Activated CD8-positive, alpha-beta memory T cell treated with anti-CD3 and anti-CD28 coated beads, Interleukin-2, amount 10 ng/mL, durations not matched to agents 7 days and 5 days (primary cell): ENCODE measurements at regions of chr1 and their contacts with region 1.

Region 1: GRCh38 chr1:154974063-154974807 is at the start of gene CKS1B:
- DNase-seq: peak; percentile 98
- ATAC-seq: peak; percentile 89
- H3K4me3 Mint-ChIP-seq: no peak within 1 kb of the TSS
- H3K27ac Mint-ChIP-seq: no peak within 1 kb of the TSS
- H3K4me1 Mint-ChIP-seq: peaks cover 38% of the 10 kb centered on the region
- H3K27me3 Mint-ChIP-seq: no peaks in the 10 kb centered on the region
- total RNA-seq, gene CKS1B: 149 to 155 TPM

Region 2: GRCh38 chr1:154747740-154748404 is 226.4 kb before region 1 on chr1:
- CTCF ChIA-PET with region 1: no interaction called
- DNase-seq: peak; percentile 82
- ATAC-seq: peak; percentile 81
- H3K4me3 Mint-ChIP-seq: peak overlapping the region; percentile 46
- H3K27ac Mint-ChIP-seq: peak overlapping the region; percentile 76
- H3K4me1 Mint-ChIP-seq: peaks cover 54% of the 10 kb centered on the region
- H3K27me3 Mint-ChIP-seq: peaks cover 81% of the 10 kb centered on the region

Region 3: DNA sequence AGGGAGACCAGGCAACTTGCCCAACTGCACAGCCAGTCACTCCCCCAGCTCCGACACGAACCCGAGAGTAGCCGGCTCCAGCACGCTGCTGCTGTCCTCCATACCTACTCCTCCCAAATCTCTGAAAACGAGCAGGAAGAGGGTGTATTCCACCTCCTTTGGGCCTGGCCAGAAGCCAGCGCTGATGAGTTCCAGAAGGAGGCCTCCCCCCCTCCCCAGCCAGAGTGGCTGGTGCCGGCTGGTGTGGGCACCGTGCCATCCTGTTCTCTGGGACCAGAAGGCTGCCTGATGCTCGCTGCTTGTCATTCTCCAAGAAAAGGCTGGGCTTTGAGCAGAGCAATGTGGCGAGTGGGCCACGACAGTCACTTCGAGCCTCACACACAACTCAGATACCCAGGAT is 126.3 kb before region 1 on chr1:
- CTCF ChIA-PET with region 1: no interaction called
- DNase-seq: no peak
- ATAC-seq: no peak
- H3K4me3 Mint-ChIP-seq: no peak overlapping the region
- H3K27ac Mint-ChIP-seq: no peak overlapping the region
- H3K4me1 Mint-ChIP-seq: peaks cover 10% of the 10 kb centered on the region
- H3K27me3 Mint-ChIP-seq: peaks cover 25% of the 10 kb centered on the region

Region 4: DNA sequence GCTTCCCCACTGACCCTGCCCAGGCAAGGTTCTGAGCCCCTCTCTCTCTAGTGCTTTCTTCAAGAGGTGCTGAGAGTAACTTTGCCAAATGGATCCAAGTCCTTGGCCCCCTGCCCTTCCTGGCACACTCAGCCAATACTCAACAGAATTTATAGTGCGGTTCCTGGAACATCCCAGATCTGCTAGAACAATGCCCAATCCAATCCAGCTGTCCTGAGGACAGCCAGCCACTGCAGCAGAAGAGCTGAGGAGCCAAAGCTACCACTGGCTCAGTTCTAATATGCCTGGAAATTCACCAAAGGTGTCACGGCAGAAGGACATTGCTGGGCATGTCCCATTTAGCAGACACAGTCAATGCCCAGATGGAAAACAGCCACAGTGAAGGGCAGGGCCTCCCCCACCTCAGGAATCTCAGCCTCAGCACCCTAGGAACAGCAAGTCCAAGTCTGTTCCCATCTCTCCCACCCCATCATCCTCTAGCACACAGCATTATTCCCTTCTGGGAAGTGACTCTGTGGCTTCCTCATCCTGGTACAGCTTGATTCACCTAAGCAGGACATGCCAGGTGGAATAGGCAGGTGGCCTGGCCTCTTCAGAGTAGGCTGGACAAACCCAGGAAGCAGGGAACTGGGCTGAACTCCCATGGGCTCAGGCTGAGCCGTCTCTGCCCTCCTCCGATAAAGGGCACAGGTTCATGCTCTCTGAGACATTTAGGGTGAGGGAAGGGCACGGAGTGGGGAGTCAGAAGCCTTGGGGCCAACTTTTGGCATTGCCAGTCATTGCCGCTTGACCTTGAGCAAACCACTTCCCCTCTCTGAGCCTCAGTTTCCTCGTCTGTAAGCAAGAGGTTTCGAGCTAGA is 62.3 kb before region 1 on chr1:
- CTCF ChIA-PET with region 1: no interaction called
- DNase-seq: no peak
- ATAC-seq: no peak
- H3K4me3 Mint-ChIP-seq: no peak overlapping the region
- H3K27ac Mint-ChIP-seq: no peak overlapping the region
- H3K4me1 Mint-ChIP-seq: no peaks in the 10 kb centered on the region
- H3K27me3 Mint-ChIP-seq: peaks cover 2% of the 10 kb centered on the region

Region 5: DNA sequence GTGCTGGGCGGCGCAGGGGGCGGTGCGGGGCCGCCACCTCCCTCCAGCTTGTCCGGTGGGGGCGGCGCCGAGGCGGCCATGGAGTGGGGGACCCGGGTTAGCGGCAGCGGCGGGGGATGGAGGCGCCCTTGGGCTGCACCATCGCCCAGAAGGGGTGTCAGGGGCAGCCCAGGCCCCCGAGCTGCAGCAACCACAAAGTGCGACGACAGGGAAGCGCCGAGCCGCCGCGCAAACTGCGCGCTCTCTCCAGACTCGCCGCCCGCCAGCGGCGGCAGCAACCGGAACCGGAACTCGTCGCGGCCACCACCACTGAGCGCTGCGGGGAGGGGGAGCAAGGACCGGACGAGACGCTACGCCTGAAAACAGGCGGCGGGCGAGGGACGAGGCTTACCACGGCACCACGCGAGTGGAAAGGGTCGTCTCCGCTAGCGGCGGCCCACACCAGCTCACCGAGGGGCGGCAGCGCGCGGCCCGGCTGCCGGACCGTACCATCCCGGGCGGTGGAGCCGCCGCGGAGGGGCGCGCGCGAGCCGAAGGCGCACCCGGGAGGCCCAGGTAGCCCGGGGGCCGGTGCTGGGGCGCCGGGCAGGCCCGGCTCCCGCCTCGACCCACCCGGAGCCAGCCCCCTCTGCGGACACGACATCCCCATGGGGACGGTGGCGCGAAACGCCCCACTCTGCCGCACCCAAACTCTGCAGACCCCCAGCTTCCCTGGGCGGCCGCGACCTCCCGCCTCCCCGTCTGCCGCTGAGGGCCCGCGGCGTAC is 12.6 kb before region 1 on chr1 and contains the start of gene PYGO2:
- CTCF ChIA-PET with region 1: interaction called, 21 read pairs
- DNase-seq: peak; percentile 87
- ATAC-seq: peak; percentile 86
- H3K4me3 Mint-ChIP-seq: peak within 1 kb of the TSS; percentile 96
- H3K27ac Mint-ChIP-seq: peak within 1 kb of the TSS; percentile 91
- H3K4me1 Mint-ChIP-seq: peaks cover 44% of the 10 kb centered on the region
- H3K27me3 Mint-ChIP-seq: no peaks in the 10 kb centered on the region
- total RNA-seq, gene PYGO2: 44.0 to 47.9 TPM